Lower lobe of right lung (tissue), 2 donors: ENCODE measurements at regions of chr3 and their contacts with region 1.

Region 1: GRCh38 chr3:150721285-150722130 is 17.8 kb upstream of the ERICH6 start:
- DNase-seq: no peak
- ATAC-seq: peak; percentile 84 to 86
- H3K4me3 ChIP-seq: no peak overlapping the region
- H3K27ac ChIP-seq: no peak overlapping the region
- H3K4me1 ChIP-seq: peaks cover 7% of the 10 kb centered on the region
- H3K27me3 ChIP-seq: no peaks in the 10 kb centered on the region
- CTCF ChIP-seq: peak; percentile 80

Region 2: DNA sequence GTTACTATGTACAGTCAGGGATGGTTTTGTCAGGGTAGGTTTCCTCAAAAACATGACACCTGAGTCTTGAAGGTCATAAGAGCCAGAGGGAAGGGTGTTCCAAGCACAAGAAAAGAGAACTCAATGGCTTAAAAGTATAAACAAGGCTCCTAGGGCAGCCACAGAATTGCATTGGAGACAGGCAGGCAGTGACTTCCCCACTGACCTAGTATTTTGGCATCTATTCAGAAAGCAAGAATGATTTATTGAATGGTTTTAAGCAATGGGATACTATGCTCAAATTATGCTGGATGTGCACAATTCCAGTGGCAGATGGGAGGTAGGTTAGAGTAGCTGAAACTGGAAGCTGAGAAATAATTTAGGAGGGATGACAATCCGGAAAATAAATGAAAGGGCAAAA is 259.4 kb before region 1 on chr3:
- intact Hi-C with region 1: no loop called
- DNase-seq: no peak
- ATAC-seq: peak in 1 of 2 donors; percentile 31
- H3K4me3 ChIP-seq: no peak overlapping the region
- H3K27ac ChIP-seq: no peak overlapping the region
- H3K4me1 ChIP-seq: no peaks in the 10 kb centered on the region
- H3K27me3 ChIP-seq: no peaks in the 10 kb centered on the region
- CTCF ChIP-seq: no peak

Region 3: GRCh38 chr3:150868282-150868681 is 146.8 kb after region 1 on chr3:
- intact Hi-C with region 1: loop called (anchors 10 kb)
- DNase-seq: no peak
- ATAC-seq: peak in 1 of 2 donors; percentile 54
- H3K4me3 ChIP-seq: no peak overlapping the region
- H3K27ac ChIP-seq: no peak overlapping the region
- H3K4me1 ChIP-seq: no peaks in the 10 kb centered on the region
- H3K27me3 ChIP-seq: no peaks in the 10 kb centered on the region
- CTCF ChIP-seq: no peak

Region 4: DNA sequence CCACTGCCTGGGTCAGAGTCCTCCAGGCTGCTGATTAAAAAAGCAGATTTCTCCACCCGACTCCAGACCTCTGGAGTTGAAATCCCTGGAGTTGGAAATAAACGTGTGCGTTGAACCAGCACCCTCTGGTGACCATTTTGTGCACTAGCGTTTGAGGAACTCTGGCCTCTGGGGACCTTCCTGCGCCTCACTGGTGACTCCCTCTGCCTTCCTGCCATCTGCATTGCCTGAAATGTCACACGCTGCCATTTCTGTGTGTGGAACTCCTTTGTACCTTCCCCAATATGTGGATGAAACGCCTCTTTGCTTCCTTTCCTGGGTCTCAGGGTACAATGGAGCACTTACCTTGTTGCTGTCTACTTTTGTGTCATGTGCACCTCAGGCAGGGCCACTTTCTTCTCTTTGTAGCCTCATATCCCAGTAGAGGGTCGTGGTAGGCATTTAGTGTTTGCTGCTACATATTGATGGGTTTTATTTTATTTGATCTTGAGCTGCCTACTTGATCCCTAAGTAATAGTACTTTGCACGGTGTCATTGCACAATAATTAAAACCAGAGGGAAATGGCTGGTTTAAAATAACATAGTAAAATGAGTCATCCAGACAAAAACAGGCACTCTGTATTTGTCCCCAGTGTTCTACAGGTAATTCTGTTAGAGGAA is 424.7 kb after region 1 on chr3:
- intact Hi-C with region 1: no loop called
- DNase-seq: peak; percentile 66
- ATAC-seq: peak; percentile 93 to 94
- H3K4me3 ChIP-seq: no peak overlapping the region
- H3K27ac ChIP-seq: no peak overlapping the region
- H3K4me1 ChIP-seq: peaks cover 8% of the 10 kb centered on the region
- H3K27me3 ChIP-seq: no peaks in the 10 kb centered on the region
- CTCF ChIP-seq: peak; percentile 87

Region 5: DNA sequence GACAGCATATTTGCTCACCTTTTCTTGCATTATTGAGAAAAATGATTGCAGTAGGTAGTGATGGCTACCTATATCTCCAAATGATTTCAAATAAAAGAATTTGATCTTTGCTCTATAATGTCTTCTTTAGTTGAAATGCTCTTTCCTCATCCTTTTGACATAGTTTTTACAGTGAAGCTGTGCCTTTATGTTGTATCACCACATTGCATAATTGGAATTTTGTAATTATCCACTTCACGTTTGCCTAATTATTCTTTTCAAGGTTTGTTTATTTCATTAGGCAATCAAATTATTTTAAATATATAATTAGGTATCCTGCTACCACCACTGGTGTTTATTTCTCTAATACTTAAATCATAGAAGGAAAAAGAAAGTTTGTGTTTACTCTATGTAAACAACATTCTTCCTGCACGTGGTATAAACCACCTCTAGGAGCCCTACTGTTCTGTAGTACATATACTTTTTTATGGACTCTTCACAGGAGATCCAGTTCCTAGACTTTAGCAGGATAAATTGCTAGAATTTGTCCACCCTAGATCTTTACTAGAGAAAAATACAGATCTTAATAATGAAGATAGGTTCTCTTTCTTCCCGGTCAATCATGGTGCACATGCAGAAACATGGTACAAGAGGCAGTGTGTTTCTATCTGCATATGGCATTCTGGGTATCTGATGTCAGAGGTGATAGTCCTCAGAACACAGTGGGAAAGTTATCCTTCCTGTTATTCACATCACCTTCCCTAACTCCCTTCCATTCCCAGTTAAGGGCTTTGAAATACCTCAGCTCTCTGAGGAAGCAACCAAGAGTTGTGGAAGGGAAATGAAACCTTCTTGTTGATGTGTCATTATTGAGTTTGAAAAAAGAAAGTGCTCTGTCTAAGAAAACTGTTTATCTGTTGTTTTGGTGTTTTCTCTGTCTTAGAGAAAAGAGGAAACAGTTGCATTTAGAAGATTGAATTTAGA is 629.4 kb after region 1 on chr3:
- intact Hi-C with region 1: no loop called
- DNase-seq: no peak
- ATAC-seq: peak in 1 of 2 donors; percentile 36
- H3K4me3 ChIP-seq: no peak overlapping the region
- H3K27ac ChIP-seq: peak overlapping the region; percentile 6
- H3K4me1 ChIP-seq: peaks cover 4% of the 10 kb centered on the region
- H3K27me3 ChIP-seq: no peaks in the 10 kb centered on the region
- CTCF ChIP-seq: no peak